Posterior cingulate gyrus (tissue), 11 donors: ENCODE measurements at regions of chr6 and their contacts with region 1.

Region 1: DNA sequence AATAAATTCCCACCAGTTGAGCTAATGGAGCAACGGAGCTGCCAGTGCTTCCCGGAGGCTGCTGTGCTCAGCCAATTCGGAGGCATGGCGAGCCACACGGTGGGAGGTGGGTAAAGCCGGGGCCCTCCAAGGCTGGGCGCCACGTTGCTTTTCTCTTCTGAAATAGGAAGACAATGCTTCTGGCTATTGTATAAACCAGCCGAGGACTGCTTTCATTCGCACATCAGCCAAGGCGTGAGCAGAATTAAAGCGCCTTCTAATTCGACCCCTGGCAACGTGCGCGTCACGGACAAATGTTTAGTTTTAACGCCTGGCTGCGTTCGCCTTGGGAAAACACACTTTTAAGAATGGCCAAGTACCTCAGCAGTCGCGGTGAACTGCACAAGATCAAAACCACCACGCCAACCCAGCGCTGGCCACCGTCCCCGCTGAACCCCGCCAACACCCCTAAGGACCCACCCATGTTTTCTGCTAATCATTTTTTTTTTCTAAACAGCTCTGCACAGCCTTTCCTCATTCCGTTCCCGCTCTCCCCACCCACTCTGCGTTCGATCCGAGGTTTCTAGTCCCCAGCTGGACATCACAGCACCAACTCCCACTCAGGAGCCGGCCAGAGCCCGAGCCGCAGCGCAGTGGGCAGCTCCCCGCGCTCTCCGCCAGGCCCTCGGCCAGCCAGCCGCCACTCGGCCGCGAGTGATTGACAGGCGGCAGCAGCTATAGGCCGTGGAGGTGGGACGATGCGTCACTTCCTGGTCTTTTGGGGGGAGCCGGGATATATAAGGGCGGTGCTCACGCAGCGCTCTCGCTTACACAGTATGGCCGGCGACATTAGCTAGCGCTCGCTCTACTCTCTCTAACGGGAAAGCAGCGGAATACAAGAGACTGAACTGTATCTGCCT is at the start of gene AMD1:
- DNase-seq: peak; percentile 96 to 100 (median 98)

Region 2: DNA sequence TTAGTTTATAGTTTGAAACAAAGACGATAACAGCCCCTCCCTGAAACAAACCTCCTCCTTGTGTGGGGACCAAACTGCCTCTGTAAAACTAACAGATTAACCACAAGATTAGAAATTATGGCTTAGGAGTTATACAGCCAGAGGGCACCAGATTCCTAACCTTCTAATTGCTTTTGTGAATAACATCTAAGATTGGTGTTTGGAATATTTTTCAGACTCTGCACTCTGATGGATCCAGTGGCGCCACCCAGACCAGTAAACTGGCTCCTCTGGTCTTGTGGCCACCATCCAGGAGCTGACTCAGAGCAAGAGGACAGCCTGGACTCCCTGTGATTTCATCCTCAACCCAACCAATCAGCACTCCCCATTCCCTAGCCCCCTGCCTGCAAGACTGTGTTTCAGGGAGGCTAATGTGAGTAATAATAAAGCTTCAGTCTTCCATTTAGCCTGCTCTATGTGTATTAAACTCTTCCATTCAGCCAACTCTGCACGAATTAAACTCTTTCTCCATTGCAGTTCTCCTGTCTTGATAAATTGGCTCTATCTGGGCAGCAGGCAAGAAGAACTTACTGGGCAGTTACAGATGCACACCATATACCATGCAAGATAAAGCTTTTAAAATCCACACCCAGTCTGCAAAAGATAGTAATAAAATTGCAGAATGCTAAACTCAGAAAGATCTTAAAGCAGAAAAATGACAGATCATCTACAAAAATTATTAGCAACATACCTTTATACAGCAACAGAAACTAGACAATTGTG is 339.3 kb before region 1 on chr6:
- intact Hi-C with region 1: loop called (anchors 5 kb)
- DNase-seq: peak; percentile 63 to 97 (median 84)

Region 3: DNA sequence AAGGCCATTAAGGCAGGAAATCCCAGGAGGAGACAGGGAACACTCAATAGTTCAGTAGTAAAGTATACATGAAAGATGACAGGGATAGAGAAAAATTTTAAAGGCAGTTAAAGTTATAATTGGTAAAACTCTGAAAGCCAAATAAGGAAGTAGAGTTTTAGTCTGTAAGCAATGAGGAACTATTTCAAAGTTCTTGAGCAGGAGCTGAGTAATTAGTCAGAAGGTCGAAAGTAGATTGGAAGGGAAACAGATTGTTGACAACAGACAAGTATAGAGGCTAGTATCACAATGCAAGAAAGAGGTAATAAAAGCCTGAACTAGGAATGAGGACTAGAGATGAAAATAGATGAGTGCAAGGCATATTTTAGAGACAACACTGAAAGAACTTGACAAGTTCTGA is 209.3 kb before region 1 on chr6:
- intact Hi-C with region 1: no loop called
- DNase-seq: no peak

Region 4: DNA sequence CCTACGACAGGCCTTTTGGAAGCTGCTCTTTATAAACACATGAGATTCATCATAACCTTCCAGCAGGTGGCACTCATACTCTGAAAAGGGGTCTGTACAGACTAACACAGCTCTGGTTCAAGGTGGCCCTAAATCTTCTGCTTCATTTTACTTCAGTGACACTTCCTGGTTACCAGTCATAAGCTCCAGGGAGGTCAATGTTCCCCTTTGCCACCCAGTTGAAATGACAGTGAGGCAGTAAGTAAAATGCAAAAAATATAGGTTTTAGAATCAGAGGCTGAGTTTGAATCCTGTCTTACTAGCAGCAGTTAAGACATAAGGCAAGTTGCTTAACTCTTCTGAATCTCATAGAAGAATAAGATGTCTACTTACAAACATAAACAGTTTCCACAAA is 191.8 kb before region 1 on chr6:
- intact Hi-C with region 1: loop called (anchors 5 kb)
- DNase-seq: peak in 3 of 10 donors; percentile 21 to 62 (median 33)

Region 5: DNA sequence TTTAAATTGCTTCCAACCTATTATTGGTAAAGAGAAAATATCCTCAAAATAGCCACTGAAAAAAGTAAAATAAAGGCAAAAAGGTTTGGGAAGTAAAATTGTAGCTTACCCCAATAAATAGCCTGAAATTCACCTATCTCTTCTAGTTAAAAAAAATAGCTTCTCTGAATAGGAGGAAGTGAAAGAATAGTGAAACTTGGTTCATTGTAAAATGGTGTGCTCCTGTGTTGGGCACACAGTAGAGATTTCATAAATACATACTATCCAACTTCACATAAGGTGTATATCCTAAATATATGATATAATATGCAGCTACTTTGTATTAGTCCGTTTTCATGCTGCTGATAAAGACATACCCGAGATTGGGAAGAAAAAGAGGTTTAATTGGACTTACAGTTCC is 104.3 kb before region 1 on chr6:
- intact Hi-C with region 1: no loop called
- DNase-seq: no peak

Region 6: GRCh38 chr6:110958329-110959192 is 84.3 kb after region 1 on chr6 and contains the start of gene GTF3C6:
- intact Hi-C with region 1: loop called (anchors 5 kb)
- DNase-seq: peak; percentile 86 to 99 (median 94)

Region 7: DNA sequence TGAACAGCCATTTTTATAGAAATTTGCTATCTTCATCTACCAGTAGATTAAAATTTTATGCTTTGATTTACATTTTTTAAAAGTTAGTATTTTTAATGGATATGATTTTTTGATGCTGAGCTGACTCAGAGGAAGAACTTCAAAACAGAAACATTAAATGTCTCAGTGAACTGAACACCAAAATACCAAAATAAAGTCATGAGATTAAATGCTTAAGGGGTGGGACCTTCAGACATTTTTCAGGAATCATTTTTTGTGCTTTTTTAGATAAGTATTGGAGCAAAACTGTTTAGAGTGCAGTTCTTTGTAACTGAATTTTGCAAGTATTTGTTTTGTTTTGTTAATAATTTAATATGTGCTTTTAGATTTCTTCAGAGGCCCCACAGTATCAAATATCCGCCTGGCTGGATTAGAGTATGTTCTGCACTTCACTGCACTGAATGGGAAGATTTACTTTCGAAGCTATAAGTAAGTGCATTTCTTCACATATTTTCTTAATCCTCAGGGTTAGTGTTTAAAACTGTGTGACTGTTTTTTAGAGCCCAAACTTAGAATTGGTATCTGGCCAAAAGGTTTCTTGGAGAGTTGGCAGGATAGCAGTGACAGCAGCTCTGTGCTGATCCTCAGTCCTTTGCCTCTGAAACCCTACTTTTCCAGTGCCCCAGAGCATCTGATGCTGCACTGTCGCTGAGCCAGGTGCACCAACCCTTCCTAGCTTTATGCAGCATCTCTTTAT is 141.3 kb after region 1 on chr6:
- intact Hi-C with region 1: no loop called
- DNase-seq: no peak

Region 8: GRCh38 chr6:111441678-111442243 is 567.5 kb after region 1 on chr6:
- intact Hi-C with region 1: no loop called
- DNase-seq: no peak